PC-3 (cell line): ENCODE measurements at regions of chr2 and their contacts with region 1.

Region 1: DNA sequence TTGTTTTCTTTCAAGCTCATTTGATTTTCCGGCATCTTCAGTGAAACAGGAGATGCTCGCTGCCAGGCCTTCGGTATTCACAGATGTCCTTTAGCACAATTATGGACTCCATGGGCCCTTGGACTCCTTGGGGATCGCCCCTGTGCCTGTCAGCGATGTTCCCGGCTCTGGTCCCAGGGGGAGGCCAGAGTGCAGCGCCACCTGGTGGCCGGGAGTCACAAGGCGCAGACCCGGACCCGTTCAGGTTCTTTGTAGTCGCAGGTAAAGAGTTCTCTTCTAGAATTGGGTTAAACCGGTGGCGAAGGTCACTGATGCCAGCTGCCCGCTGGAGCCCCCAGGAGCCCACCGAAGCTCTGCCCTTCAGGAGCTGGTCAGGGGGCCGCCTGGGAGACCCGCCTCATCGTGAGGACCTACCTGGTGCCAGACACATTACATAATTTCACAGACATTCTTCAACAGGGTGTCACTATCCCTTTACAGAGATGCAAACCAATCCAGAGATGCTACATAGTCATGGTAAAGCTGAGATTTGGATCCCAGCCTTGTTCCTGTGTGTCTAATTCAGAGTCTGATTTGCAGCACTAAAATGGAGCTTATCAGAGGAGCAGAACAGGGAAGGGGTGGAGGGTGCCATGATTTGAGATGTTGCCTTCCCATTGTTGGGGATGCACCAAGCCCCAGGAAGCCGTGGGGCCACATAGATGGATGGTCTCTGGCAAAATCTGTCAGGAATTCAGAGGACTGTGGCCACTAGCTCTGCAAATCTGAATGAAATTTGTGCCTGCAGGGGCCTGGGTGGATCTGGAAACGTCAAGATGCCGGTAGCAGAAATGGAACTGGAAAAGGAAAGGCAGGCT is 6.0 kb upstream of the INPP5D start:
- DNase-seq: peak; percentile 62
- ATAC-seq: no peak
- H3K4me3 ChIP-seq: no peak overlapping the region
- H3K27ac ChIP-seq: no peak overlapping the region
- H3K4me1 ChIP-seq: peaks cover 50% of the 10 kb centered on the region
- H3K27me3 ChIP-seq: no peaks in the 10 kb centered on the region
- CTCF ChIP-seq: peak; percentile 96

Region 2: GRCh38 chr2:232539298-232540231 is 514.6 kb before region 1 on chr2 and contains the start of gene CHRNG:
- CTCF ChIA-PET with region 1: no interaction called
- POLR2A ChIA-PET with region 1: no interaction called
- intact Hi-C with region 1: no loop called
- DNase-seq: no peak
- ATAC-seq: no peak
- H3K4me3 ChIP-seq: no peak within 1 kb of the TSS
- H3K27ac ChIP-seq: no peak within 1 kb of the TSS
- H3K4me1 ChIP-seq: no peaks in the 10 kb centered on the region
- H3K27me3 ChIP-seq: no peaks in the 10 kb centered on the region
- CTCF ChIP-seq: no peak
- total RNA-seq, gene CHRNG: not detected in 2 replicates

Region 3: GRCh38 chr2:232876078-232876977 is 177.8 kb before region 1 on chr2:
- CTCF ChIA-PET with region 1: no interaction called
- POLR2A ChIA-PET with region 1: no interaction called
- intact Hi-C with region 1: loop called (anchors 10 kb)
- DNase-seq: peak; percentile 80
- ATAC-seq: peak; percentile 68
- H3K4me3 ChIP-seq: peak overlapping the region; percentile 85
- H3K27ac ChIP-seq: peak overlapping the region; percentile 12
- H3K4me1 ChIP-seq: peaks cover 17% of the 10 kb centered on the region
- H3K27me3 ChIP-seq: no peaks in the 10 kb centered on the region
- CTCF ChIP-seq: 0 out of 2 replicates have a peak, but pooled peaks have one; percentile 10

Region 4: GRCh38 chr2:232903989-232904388 is 150.2 kb before region 1 on chr2:
- CTCF ChIA-PET with region 1: no interaction called
- POLR2A ChIA-PET with region 1: no interaction called
- intact Hi-C with region 1: no loop called
- DNase-seq: no peak
- ATAC-seq: no peak
- H3K4me3 ChIP-seq: no peak overlapping the region
- H3K27ac ChIP-seq: no peak overlapping the region
- H3K4me1 ChIP-seq: peaks cover 22% of the 10 kb centered on the region
- H3K27me3 ChIP-seq: no peaks in the 10 kb centered on the region
- CTCF ChIP-seq: no peak

Region 5: DNA sequence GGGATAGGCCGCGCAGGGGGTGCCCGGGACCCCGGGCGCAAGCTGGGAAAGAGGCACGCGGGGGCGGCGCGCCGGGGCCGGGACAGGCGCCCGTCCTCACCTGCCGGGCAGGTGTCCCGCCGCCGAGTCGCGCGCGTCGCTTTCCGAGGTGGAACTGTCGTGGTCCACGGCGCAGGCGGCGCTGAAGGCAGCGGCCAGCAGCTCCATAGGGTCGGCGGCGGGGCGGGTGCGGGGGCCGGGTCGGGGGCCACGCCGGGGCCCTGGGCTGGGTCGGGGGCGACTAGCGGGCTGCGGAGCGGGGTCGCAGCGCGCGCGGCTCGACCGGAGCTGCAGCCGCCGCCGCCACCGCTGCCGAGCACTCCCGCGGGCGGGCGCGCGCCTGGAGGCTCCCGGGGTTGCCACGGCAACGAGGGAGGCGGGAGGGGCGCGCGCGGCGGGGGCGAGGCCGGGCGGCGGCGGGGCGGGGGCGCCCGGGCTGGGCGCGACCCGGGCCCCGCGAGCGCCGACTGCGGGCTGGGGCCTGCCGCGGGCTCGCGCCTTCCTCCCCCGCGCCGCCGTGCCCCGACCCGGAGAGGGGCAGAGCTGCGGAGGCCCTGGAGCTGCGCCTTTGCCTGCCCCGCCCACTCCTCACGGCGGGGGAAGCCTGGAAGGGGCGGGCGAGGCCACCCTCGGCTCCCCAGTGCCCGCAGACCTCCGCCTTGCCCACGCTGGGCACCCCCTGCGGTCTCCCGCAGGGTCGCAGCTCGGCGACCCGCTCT is 126.2 kb before region 1 on chr2:
- CTCF ChIA-PET with region 1: no interaction called
- POLR2A ChIA-PET with region 1: no interaction called
- intact Hi-C with region 1: loop called (anchors 5 kb)
- DNase-seq: peak; percentile 40
- ATAC-seq: peak; percentile 13
- H3K4me3 ChIP-seq: peak overlapping the region; percentile 71
- H3K27ac ChIP-seq: peak overlapping the region; percentile 47; the same call in 1 of the 2 replicates
- H3K4me1 ChIP-seq: peaks cover 25% of the 10 kb centered on the region
- H3K27me3 ChIP-seq: no peaks in the 10 kb centered on the region
- CTCF ChIP-seq: no peak

Region 6: GRCh38 chr2:232979871-232980461 is 74.2 kb before region 1 on chr2:
- CTCF ChIA-PET with region 1: interaction called, 5 read pairs
- POLR2A ChIA-PET with region 1: no interaction called
- intact Hi-C with region 1: loop called (anchors 2 kb)
- DNase-seq: peak; percentile 95
- ATAC-seq: peak; percentile 91
- H3K4me3 ChIP-seq: no peak overlapping the region
- H3K27ac ChIP-seq: peak overlapping the region; percentile 90
- H3K4me1 ChIP-seq: peaks cover 36% of the 10 kb centered on the region
- H3K27me3 ChIP-seq: no peaks in the 10 kb centered on the region
- CTCF ChIP-seq: peak; percentile 67

Region 7: GRCh38 chr2:232988765-232989085 is 65.4 kb before region 1 on chr2:
- CTCF ChIA-PET with region 1: no interaction called
- POLR2A ChIA-PET with region 1: no interaction called
- intact Hi-C with region 1: loop called (anchors 2 kb)
- DNase-seq: no peak
- ATAC-seq: no peak
- H3K4me3 ChIP-seq: no peak overlapping the region
- H3K27ac ChIP-seq: peak overlapping the region; percentile 98
- H3K4me1 ChIP-seq: peaks cover 29% of the 10 kb centered on the region
- H3K27me3 ChIP-seq: no peaks in the 10 kb centered on the region
- CTCF ChIP-seq: no peak

Region 8: GRCh38 chr2:233165895-233166661 is 111.9 kb after region 1 on chr2:
- CTCF ChIA-PET with region 1: no interaction called
- POLR2A ChIA-PET with region 1: interaction called, 4 read pairs
- intact Hi-C with region 1: loop called (anchors 5 kb)
- DNase-seq: peak; percentile 84
- ATAC-seq: peak; percentile 91
- H3K4me3 ChIP-seq: peak overlapping the region; percentile 28; the same call in 1 of the 2 replicates
- H3K27ac ChIP-seq: peak overlapping the region; percentile 93
- H3K4me1 ChIP-seq: peaks cover 21% of the 10 kb centered on the region
- H3K27me3 ChIP-seq: no peaks in the 10 kb centered on the region
- CTCF ChIP-seq: no peak